Activated CD4-positive, alpha-beta memory T cell treated with anti-CD3 and anti-CD28 coated beads for 36 hours (primary cell): ENCODE measurements at regions of chr1 and their contacts with region 1.

Region 1: GRCh38 chr1:218377143-218377660 is 32.1 kb downstream of the TGFB2 start:
- DNase-seq: peak; percentile 83
- H3K4me3 Mint-ChIP-seq: peak overlapping the region; percentile 48
- H3K27ac Mint-ChIP-seq: peak overlapping the region; percentile 66
- H3K4me1 Mint-ChIP-seq: peaks cover 12% of the 10 kb centered on the region
- H3K27me3 Mint-ChIP-seq: peaks cover 53% of the 10 kb centered on the region

Region 2: GRCh38 chr1:218345673-218346390 is 31.4 kb before region 1 on chr1:
- CTCF ChIA-PET with region 1: interaction called, 3 read pairs
- POLR2A ChIA-PET with region 1: no interaction called
- intact Hi-C with region 1: loop called (anchors 1 kb)
- DNase-seq: peak; percentile 37
- H3K4me3 Mint-ChIP-seq: no peak overlapping the region
- H3K27ac Mint-ChIP-seq: no peak overlapping the region
- H3K4me1 Mint-ChIP-seq: peaks cover 23% of the 10 kb centered on the region
- H3K27me3 Mint-ChIP-seq: peaks cover 34% of the 10 kb centered on the region

Region 3: GRCh38 chr1:218351391-218352074 is 25.7 kb before region 1 on chr1:
- CTCF ChIA-PET with region 1: interaction called, 3 read pairs
- POLR2A ChIA-PET with region 1: no interaction called
- intact Hi-C with region 1: loop called (anchors 1 kb)
- DNase-seq: peak; percentile 36
- H3K4me3 Mint-ChIP-seq: peak overlapping the region; percentile 10
- H3K27ac Mint-ChIP-seq: no peak overlapping the region
- H3K4me1 Mint-ChIP-seq: peaks cover 31% of the 10 kb centered on the region
- H3K27me3 Mint-ChIP-seq: peaks cover 38% of the 10 kb centered on the region

Region 4: GRCh38 chr1:218361298-218362065 is 15.7 kb before region 1 on chr1:
- CTCF ChIA-PET with region 1: interaction called, 5 read pairs
- POLR2A ChIA-PET with region 1: no interaction called
- intact Hi-C with region 1: loop called (anchors 1 kb)
- DNase-seq: no peak
- H3K4me3 Mint-ChIP-seq: no peak overlapping the region
- H3K27ac Mint-ChIP-seq: no peak overlapping the region
- H3K4me1 Mint-ChIP-seq: no peaks in the 10 kb centered on the region
- H3K27me3 Mint-ChIP-seq: peaks cover 13% of the 10 kb centered on the region

Region 5: GRCh38 chr1:219324629-219325367 is 947.6 kb after region 1 on chr1:
- CTCF ChIA-PET with region 1: no interaction called
- POLR2A ChIA-PET with region 1: no interaction called
- intact Hi-C with region 1: loop called (anchors 10 kb)
- DNase-seq: peak; percentile 9
- H3K4me3 Mint-ChIP-seq: no peak overlapping the region
- H3K27ac Mint-ChIP-seq: no peak overlapping the region
- H3K4me1 Mint-ChIP-seq: peaks cover 11% of the 10 kb centered on the region
- H3K27me3 Mint-ChIP-seq: peaks cover 6% of the 10 kb centered on the region